ENCODE measurements at regions of chr2 and their contacts with region 1.

Region 1: DNA sequence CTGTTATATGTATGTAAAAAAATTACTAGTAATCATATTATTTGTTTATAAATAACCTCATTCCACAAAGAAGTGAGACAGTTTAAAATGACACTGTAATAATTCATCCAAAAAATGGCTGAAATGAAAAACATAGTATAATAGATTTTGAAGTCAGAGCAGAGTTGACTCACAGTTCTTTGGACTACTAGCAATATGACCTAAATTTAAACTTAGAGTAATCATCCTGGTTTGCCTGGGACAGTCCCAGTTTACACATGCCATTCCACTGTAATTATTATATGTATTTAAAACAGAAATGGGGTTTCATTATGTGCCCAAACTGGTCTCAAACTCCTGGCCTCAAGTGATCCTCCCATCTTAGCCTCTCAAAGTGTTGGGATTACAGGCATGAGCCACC is 48.3 kb downstream of the CCDC88A start:
- DNase-seq: no peak
- H3K4me3 ChIP-seq: no peak overlapping the region
- H3K27ac ChIP-seq: no peak overlapping the region
- H3K4me1 ChIP-seq: no peaks in the 10 kb centered on the region
- H3K27me3 ChIP-seq: no peaks in the 10 kb centered on the region
- CTCF ChIP-seq: no peak
- EP300 ChIP-seq: no peak
- POLR2A ChIP-seq: no peak

Region 2: DNA sequence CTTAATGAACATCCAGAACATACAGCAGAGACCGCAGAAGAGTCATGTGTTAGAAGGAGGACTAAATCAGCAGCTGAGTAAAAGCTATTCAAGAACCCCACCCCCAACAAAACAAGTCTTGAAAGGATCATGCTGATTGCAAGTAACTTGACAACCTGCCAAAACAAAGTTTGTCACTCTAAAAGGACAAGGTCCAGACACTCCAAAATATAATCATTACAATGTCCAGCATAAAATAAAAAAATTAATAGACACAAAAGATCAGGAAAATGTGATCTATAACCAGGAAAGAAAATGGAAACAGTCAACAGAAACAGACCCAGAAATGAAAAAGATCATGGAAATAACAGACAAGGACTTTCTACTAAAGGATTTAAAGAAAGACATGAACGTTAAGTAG is 19.8 kb after region 1 on chr2:
- intact Hi-C with region 1: loop called in 1 of 4 experiments (anchors 2 kb)
- DNase-seq: no peak
- H3K4me3 ChIP-seq: no peak overlapping the region
- H3K27ac ChIP-seq: no peak overlapping the region
- H3K4me1 ChIP-seq: no peaks in the 10 kb centered on the region
- H3K27me3 ChIP-seq: no peaks in the 10 kb centered on the region
- CTCF ChIP-seq: no peak
- EP300 ChIP-seq: no peak
- POLR2A ChIP-seq: no peak

Region 3: GRCh38 chr2:55460562-55460961 is 89.2 kb after region 1 on chr2:
- intact Hi-C with region 1: no loop called
- DNase-seq: no peak
- H3K4me3 ChIP-seq: no peak overlapping the region
- H3K27ac ChIP-seq: no peak overlapping the region
- H3K4me1 ChIP-seq: no peaks in the 10 kb centered on the region
- H3K27me3 ChIP-seq: no peaks in the 10 kb centered on the region
- CTCF ChIP-seq: no peak
- EP300 ChIP-seq: no peak
- POLR2A ChIP-seq: no peak

Region 4: GRCh38 chr2:55617175-55618024 is 246.0 kb after region 1 on chr2 and contains the start of gene PPP4R3B:
- intact Hi-C with region 1: no loop called
- DNase-seq: peak; percentile 99 to 100 (median 99)
- H3K4me3 ChIP-seq: peak within 1 kb of the TSS; percentile 97
- H3K27ac ChIP-seq: peak within 1 kb of the TSS; percentile 66 to 86
- H3K4me1 ChIP-seq: peaks cover 7% of the 10 kb centered on the region
- H3K27me3 ChIP-seq: no peaks in the 10 kb centered on the region
- CTCF ChIP-seq: peak; percentile 20 to 88 (median 83)
- EP300 ChIP-seq: no peak
- POLR2A ChIP-seq: peak; percentile 89
- total RNA-seq, gene PPP4R3B: 48.0 to 66.6 (median 56.4) TPM